ENCODE measurements at regions of chr10 and their contacts with region 1.

Region 1: DNA sequence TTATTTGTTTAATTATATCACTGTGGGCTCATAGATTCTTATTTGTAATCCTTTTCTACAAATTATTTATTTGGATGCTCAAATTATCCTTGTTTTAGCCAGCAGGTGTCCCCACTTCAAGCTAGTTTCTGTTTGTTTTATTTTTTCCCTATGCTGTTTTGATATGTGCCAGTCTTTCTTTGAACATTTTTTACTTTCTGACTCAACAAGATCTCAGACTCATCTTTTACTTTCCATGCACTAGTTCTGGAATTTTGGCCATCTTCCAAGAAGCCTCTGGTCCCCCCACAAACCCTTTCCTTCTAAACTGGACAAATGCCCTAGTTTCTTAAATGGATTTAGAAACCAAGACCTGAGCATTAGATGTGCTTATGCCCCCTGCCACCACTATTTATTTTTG is 11.5 kb upstream of the MRPS16 start:
- DNase-seq: peak; percentile 23
- H3K4me3 ChIP-seq: no peak overlapping the region
- H3K27ac ChIP-seq: no peak overlapping the region
- H3K4me1 ChIP-seq: peaks cover 21% of the 10 kb centered on the region
- H3K27me3 ChIP-seq: no peaks in the 10 kb centered on the region
- CTCF ChIP-seq: peak; percentile 59 to 65

Region 2: GRCh38 chr10:73339436-73339835 is 75.5 kb after region 1 on chr10:
- CTCF ChIA-PET with region 1: no interaction called
- dilution Hi-C with region 1: no loop called
- in situ Hi-C with region 1: no loop called
- intact Hi-C with region 1: loop called (anchors 5 kb)
- DNase-seq: no peak
- H3K4me3 ChIP-seq: no peak overlapping the region
- H3K27ac ChIP-seq: no peak overlapping the region
- H3K4me1 ChIP-seq: peaks cover 4% of the 10 kb centered on the region
- H3K27me3 ChIP-seq: peaks cover 2% of the 10 kb centered on the region
- CTCF ChIP-seq: no peak

Region 3: GRCh38 chr10:73358331-73359279 is 94.7 kb after region 1 on chr10 and contains the start of gene CFAP70:
- CTCF ChIA-PET with region 1: no interaction called
- dilution Hi-C with region 1: loop called (anchors 5 kb)
- in situ Hi-C with region 1: loop called in 1 of 2 experiments (anchors 10 kb)
- intact Hi-C with region 1: loop called (anchors 5 kb)
- DNase-seq: peak; percentile 94
- H3K4me3 ChIP-seq: peak within 1 kb of the TSS; percentile 77 to 95 (median 82)
- H3K27ac ChIP-seq: peak within 1 kb of the TSS; percentile 95
- H3K4me1 ChIP-seq: peaks cover 12% of the 10 kb centered on the region
- H3K27me3 ChIP-seq: no peaks in the 10 kb centered on the region
- CTCF ChIP-seq: no peak
- total RNA-seq, gene CFAP70: 1.2 to 3.0 TPM

Region 4: DNA sequence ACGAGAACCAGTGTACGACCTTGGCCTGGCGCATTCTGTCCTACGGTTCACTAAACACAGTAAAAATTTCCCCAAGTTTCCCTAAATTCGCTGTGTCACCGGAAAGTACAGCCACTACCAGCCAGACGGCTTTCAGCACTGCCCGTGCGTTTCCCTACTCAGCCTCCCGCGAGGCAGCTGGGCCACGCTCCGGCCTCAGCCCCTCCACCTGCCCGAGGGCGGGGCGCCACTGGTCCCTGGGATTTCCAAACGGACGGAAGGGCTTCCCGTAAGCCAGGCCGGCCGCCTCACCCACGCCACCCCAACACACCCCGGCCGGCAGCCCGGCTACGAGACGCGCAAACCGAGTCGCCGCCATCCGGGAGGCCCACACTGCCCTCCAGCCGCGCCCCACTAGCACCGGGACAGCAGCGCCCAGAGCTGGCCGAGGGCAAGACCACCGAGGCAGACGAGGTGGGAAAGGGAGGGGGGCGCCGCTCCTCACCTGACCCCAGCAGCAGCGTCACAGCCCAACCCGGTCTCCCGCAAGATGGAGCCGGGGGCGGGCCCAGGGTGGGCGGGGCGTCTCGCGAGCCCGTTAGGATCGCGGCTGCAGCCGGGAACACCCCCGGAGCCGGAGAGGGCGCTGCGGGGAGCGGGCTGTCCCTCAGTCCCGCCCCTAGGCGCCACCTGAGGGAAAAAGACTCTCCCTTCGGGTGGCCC is 149.7 kb after region 1 on chr10 and contains the start of gene ANXA7:
- CTCF ChIA-PET with region 1: no interaction called
- dilution Hi-C with region 1: no loop called
- in situ Hi-C with region 1: no loop called
- intact Hi-C with region 1: loop called (anchors 1 kb)
- DNase-seq: peak; percentile 89
- H3K4me3 ChIP-seq: peak within 1 kb of the TSS; percentile 51 to 100 (median 92)
- H3K27ac ChIP-seq: peak within 1 kb of the TSS; percentile 92
- H3K4me1 ChIP-seq: peaks cover 15% of the 10 kb centered on the region
- H3K27me3 ChIP-seq: no peaks in the 10 kb centered on the region
- CTCF ChIP-seq: peak in 1 of 2 donors; percentile 36
- total RNA-seq, gene ANXA7: 107 to 134 TPM

Region 5: DNA sequence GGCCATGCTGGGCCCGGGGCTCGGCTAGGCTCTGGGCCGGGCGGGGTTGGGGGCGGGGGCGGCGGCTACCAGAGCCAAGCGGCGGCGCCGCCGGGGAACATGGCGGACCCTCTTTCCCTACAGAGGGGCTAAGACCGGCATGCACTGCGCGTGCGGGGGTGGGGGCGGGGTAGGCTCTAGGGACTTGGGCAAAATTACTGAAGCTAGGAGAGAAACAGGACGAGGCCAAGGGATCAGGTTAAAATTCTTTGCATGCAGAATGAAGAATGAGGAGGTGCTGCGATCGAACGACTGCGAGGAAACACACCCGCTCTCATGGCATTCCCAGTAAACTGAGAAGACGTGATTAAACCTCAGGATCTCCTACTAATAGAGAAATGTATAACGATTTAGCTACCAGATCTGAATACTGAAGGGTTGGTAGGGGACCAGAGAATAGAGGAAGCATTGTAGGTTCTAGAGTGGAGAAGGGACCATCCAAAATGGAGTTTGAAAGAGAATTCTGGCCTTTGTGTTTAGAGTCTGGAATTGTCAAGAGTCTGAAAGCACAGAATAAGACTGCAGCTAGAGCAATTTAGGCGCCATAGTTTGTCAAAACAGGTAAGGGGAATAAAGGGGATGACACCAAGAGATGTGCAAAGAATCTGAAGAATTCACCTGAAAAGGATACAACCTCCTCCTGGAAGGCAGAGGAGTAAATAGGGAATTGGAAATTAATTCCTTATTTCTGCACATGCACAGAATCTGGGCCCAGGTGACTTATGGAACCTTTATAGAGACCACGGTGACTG is 232.1 kb after region 1 on chr10 and contains the start of gene PPP3CB:
- CTCF ChIA-PET with region 1: no interaction called
- dilution Hi-C with region 1: no loop called
- in situ Hi-C with region 1: no loop called
- intact Hi-C with region 1: loop called (anchors 5 kb)
- DNase-seq: peak; percentile 96
- H3K4me3 ChIP-seq: peak within 1 kb of the TSS; percentile 73 to 93 (median 74)
- H3K27ac ChIP-seq: peak within 1 kb of the TSS; percentile 75
- H3K4me1 ChIP-seq: peaks cover 23% of the 10 kb centered on the region
- H3K27me3 ChIP-seq: no peaks in the 10 kb centered on the region
- CTCF ChIP-seq: no peak
- total RNA-seq, gene PPP3CB: 21.2 to 30.9 TPM

Region 6: DNA sequence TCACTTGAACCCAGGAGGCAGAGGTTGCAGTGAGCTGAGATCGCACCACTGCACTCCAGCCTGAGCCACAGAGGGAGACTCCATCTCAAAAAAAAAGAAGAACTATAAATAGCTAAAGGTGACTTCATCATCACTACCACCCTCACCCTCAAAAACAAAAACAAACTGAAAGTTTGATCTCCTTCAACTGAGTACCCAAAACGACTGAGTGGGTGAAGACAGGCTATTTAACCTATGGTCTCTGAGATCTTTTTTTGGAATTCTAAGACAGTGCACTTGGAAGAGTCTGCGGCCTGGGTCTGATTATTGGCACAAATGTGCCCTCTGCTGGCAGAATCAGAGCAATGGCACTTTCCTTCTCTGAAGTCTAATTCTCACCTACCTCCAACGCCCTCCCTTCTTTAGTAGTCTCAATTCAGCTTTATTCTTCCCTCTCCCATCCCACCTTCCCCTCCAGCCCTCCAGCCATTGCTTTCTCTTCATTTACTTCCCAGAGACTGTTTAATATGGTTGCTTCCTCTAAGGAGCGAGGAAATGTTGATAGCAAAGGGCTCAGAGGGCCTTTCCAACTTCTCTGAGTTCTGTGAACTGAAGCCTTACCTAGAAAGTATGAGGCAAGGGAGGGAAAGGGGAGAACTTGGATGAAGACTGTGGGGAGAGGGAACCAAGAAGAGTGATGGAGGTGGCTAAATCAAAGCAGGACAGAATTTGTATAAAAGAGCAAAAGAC is 380.2 kb after region 1 on chr10:
- CTCF ChIA-PET with region 1: no interaction called
- dilution Hi-C with region 1: no loop called
- in situ Hi-C with region 1: loop called in 1 of 2 experiments (anchors 10 kb)
- intact Hi-C with region 1: loop called (anchors 1 kb)
- DNase-seq: peak; percentile 31
- H3K4me3 ChIP-seq: no peak overlapping the region
- H3K27ac ChIP-seq: no peak overlapping the region
- H3K4me1 ChIP-seq: peaks cover 8% of the 10 kb centered on the region
- H3K27me3 ChIP-seq: no peaks in the 10 kb centered on the region
- CTCF ChIP-seq: peak; percentile 84 to 87